Uterus (tissue), 4 donors: ENCODE measurements at regions of chr2 and their contacts with region 1.

Region 1: DNA sequence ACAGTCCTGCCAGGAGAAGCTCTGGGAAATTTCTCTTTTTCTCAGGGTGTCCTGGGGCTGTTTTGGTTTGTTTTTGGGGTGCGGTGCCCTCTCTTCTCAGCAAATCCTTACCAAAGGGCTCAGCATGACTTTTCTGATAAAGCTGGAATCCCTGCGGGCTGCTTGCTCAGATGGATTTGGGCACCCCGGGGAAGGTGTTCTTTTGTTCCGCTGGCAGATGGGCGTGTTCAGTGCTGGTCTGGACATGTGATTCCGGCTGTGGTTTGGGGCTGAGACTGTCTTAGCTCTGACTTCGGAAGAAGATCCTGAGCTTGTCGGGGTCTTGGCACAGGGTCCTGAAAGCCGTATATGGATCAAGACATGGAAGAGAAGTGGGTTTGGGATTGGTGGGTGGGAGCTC is 134.2 kb upstream of the SPRED2 start:
- DNase-seq: no peak
- H3K4me3 ChIP-seq: no peak overlapping the region
- H3K27ac ChIP-seq: no peak overlapping the region
- H3K4me1 ChIP-seq: no peaks in the 10 kb centered on the region
- H3K27me3 ChIP-seq: no peaks in the 10 kb centered on the region
- CTCF ChIP-seq: no peak
- POLR2A ChIP-seq: no peak

Region 2: DNA sequence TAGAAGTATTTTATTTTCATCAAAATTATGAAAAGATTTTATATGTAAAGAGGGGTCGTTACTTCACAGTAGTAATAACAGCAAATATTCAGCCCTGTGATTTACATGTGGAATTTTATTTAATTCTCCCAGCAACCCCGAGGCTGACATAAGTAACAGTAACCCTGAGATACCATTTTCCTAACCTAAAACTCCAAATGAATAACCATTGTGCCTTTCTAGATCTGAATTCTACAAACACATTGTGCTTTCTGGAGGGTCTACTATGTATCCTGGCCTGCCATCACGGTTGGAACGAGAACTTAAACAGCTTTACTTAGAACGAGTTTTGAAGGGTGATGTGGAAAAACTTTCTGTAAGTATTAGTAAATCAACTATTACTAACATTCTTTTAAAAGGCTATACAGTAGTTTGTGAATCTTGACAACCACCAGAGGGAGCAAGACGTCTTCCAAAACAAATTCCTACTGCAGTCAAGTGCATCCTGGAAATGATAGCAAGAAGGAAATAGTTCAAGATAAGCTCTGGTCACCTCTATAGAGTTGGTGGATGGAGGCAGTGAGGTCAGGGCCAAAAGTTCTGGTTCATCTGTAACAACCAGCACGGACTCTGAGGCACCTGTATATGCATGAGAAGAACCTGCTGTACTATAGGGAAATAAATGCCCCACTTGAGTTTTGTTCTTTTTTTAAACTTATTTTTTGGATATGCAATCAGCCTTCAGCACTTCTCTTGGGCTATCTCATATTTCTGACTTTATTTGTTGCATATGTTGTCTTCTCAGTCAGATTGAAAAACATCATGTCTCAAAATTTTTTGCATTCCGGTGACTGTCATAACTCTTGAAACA is 301.6 kb before region 1 on chr2:
- intact Hi-C with region 1: loop called (anchors 5 kb)
- DNase-seq: peak in 1 of 2 donors; percentile 51
- H3K4me3 ChIP-seq: no peak overlapping the region
- H3K27ac ChIP-seq: no peak overlapping the region
- H3K4me1 ChIP-seq: no peaks in the 10 kb centered on the region
- H3K27me3 ChIP-seq: no peaks in the 10 kb centered on the region
- CTCF ChIP-seq: peak; percentile 64 to 84 (median 78)
- POLR2A ChIP-seq: no peak